OCI-LY7 (cell line): ENCODE measurements at regions of chr3 and their contacts with region 1.

Region 1: GRCh38 chr3:25664810-25665314 is at the start of gene TOP2B:
- DNase-seq: peak; percentile 97
- H3K4me3 ChIP-seq: peak within 1 kb of the TSS; percentile 90
- H3K27ac ChIP-seq: peak within 1 kb of the TSS; percentile 89
- H3K4me1 ChIP-seq: peaks cover 44% of the 10 kb centered on the region
- CTCF ChIP-seq: no peak
- total RNA-seq, gene TOP2B: 162 and 205 TPM in 2 replicates

Region 2: DNA sequence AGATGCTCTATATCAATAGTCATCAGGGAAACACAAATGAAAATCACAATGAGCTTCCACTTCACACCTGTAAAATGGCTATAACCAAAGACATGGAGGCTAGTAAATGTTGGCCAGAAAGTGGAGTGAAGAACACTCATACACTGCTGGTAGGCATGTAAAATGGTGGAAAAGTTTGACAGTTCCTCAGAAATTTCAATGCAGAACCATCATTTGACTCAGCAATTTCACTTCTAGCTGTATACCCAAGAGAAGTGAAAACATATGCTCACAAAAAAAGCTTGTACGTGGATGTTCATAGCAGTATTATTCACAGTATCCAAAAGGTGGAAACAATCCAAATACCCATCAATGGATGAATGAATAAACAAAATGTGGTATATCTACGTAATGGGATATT is 19.0 kb after region 1 on chr3:
- CTCF ChIA-PET with region 1: no interaction called
- POLR2A ChIA-PET with region 1: interaction called, 13 read pairs
- intact Hi-C with region 1: no loop called
- DNase-seq: no peak
- H3K4me3 ChIP-seq: no peak overlapping the region
- H3K27ac ChIP-seq: no peak overlapping the region
- H3K4me1 ChIP-seq: no peaks in the 10 kb centered on the region
- CTCF ChIP-seq: no peak

Region 3: DNA sequence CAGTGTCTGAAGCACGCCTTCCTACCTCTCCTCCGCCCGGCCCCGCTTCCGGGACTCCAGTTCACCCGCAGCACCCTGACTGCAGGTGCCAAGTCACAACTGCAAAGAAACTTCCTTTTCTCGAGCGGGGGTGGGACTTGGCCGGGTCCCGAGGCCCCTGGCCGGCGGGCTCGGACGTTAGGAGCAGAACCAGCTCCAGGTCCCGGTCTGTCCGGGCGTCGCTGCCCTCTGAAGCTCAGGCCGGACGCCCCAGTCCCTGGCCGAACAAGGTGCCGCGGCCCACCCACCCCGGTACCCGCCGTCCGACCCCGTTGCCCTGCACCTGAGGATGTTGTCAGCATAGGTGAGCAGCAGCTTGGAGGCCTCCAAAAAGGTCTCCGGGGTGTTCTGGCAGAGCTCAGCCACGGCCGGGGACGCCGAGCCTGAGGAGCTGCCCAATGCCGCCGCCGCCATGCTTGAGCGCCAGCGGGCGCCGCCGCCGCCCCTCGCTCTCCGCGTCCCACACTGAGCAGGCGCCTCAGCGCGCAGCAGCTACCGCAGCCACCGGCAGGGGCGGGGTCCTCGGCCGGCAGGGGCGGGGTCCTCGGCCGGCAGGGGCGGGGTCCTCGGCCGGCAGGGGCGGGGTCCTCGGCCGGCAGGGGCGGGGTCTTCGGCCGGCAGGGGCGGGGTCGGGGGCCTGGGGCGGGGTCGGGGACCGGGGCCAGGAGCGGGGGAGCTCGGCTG is 118.2 kb after region 1 on chr3 and contains the start of gene NGLY1:
- CTCF ChIA-PET with region 1: interaction called, 3 read pairs
- POLR2A ChIA-PET with region 1: interaction called, 20 read pairs
- intact Hi-C with region 1: loop called (anchors 1 kb)
- DNase-seq: peak; percentile 91
- H3K4me3 ChIP-seq: peak within 1 kb of the TSS; percentile 90
- H3K27ac ChIP-seq: peak within 1 kb of the TSS; percentile 90
- H3K4me1 ChIP-seq: peaks cover 58% of the 10 kb centered on the region
- CTCF ChIP-seq: no peak
- total RNA-seq, gene NGLY1: 88.1 and 97.5 TPM in 2 replicates

Region 4: GRCh38 chr3:25789596-25790556 is 125.0 kb after region 1 on chr3 and contains the start of gene OXSM:
- CTCF ChIA-PET with region 1: no interaction called
- POLR2A ChIA-PET with region 1: interaction called, 20 read pairs
- intact Hi-C with region 1: no loop called
- DNase-seq: peak; percentile 97
- H3K4me3 ChIP-seq: peak within 1 kb of the TSS; percentile 81
- H3K27ac ChIP-seq: peak within 1 kb of the TSS; percentile 83
- H3K4me1 ChIP-seq: peaks cover 60% of the 10 kb centered on the region
- CTCF ChIP-seq: no peak
- total RNA-seq, gene OXSM: 9.5 and 17.3 TPM in 2 replicates

Region 5: GRCh38 chr3:25831578-25831977 is 166.7 kb after region 1 on chr3:
- CTCF ChIA-PET with region 1: no interaction called
- POLR2A ChIA-PET with region 1: interaction called, 10 read pairs
- intact Hi-C with region 1: loop called (anchors 1 kb)
- DNase-seq: peak; percentile 88
- H3K4me3 ChIP-seq: peak overlapping the region; percentile 45
- H3K27ac ChIP-seq: peak overlapping the region; percentile 81
- H3K4me1 ChIP-seq: peaks cover 68% of the 10 kb centered on the region
- CTCF ChIP-seq: peak; percentile 80